Calu3 (cell line): ENCODE measurements at regions of chr16 and their contacts with region 1.

Region 1: GRCh38 chr16:2821487-2822157 is 4.6 kb downstream of the PRSS21 start:
- DNase-seq: no peak
- H3K4me3 Mint-ChIP-seq: no peak overlapping the region
- H3K27ac Mint-ChIP-seq: no peak overlapping the region
- H3K4me1 Mint-ChIP-seq: peaks cover 20% of the 10 kb centered on the region
- H3K27me3 Mint-ChIP-seq: no peaks in the 10 kb centered on the region
- CTCF ChIP-seq: no peak

Region 2: GRCh38 chr16:2777231-2777902 is 44.3 kb before region 1 on chr16 and contains the start of gene ELOB:
- CTCF ChIA-PET with region 1: interaction called, 3 read pairs
- intact Hi-C with region 1: loop called (anchors 5 kb)
- DNase-seq: peak; percentile 94
- H3K4me3 Mint-ChIP-seq: peak within 1 kb of the TSS; percentile 93
- H3K27ac Mint-ChIP-seq: peak within 1 kb of the TSS; percentile 89
- H3K4me1 Mint-ChIP-seq: peaks cover 17% of the 10 kb centered on the region
- H3K27me3 Mint-ChIP-seq: no peaks in the 10 kb centered on the region
- CTCF ChIP-seq: no peak
- total RNA-seq, gene ELOB: 269 TPM in 2 replicates

Region 3: GRCh38 chr16:3761375-3762106 is 939.9 kb after region 1 on chr16:
- CTCF ChIA-PET with region 1: no interaction called
- intact Hi-C with region 1: no loop called
- DNase-seq: no peak
- H3K4me3 Mint-ChIP-seq: no peak overlapping the region
- H3K27ac Mint-ChIP-seq: no peak overlapping the region
- H3K4me1 Mint-ChIP-seq: no peaks in the 10 kb centered on the region
- H3K27me3 Mint-ChIP-seq: no peaks in the 10 kb centered on the region
- CTCF ChIP-seq: no peak